ENCODE measurements at regions of chr2 and their contacts with region 1.

Region 1: GRCh38 chr2:42828487-42829425 is 36.4 kb upstream of the HAAO start:
- DNase-seq: peak; percentile 80 to 84
- H3K4me3 ChIP-seq: no peak overlapping the region
- H3K27ac ChIP-seq: peak overlapping the region; percentile 27 to 43
- H3K4me1 ChIP-seq: peaks cover 0 to 28% (median 21%) of the 10 kb centered on the region in 4 donors
- H3K27me3 ChIP-seq: no peaks in the 10 kb centered on the region
- CTCF ChIP-seq: peak; percentile 94 to 95

Region 2: GRCh38 chr2:42770288-42771131 is 58.2 kb before region 1 on chr2:
- intact Hi-C with region 1: no loop called
- DNase-seq: no peak
- H3K4me3 ChIP-seq: no peak overlapping the region
- H3K27ac ChIP-seq: no peak overlapping the region
- H3K4me1 ChIP-seq: no peaks in the 10 kb centered on the region
- H3K27me3 ChIP-seq: no peaks in the 10 kb centered on the region
- CTCF ChIP-seq: peak in 1 of 2 experiments; percentile 14

Region 3: DNA sequence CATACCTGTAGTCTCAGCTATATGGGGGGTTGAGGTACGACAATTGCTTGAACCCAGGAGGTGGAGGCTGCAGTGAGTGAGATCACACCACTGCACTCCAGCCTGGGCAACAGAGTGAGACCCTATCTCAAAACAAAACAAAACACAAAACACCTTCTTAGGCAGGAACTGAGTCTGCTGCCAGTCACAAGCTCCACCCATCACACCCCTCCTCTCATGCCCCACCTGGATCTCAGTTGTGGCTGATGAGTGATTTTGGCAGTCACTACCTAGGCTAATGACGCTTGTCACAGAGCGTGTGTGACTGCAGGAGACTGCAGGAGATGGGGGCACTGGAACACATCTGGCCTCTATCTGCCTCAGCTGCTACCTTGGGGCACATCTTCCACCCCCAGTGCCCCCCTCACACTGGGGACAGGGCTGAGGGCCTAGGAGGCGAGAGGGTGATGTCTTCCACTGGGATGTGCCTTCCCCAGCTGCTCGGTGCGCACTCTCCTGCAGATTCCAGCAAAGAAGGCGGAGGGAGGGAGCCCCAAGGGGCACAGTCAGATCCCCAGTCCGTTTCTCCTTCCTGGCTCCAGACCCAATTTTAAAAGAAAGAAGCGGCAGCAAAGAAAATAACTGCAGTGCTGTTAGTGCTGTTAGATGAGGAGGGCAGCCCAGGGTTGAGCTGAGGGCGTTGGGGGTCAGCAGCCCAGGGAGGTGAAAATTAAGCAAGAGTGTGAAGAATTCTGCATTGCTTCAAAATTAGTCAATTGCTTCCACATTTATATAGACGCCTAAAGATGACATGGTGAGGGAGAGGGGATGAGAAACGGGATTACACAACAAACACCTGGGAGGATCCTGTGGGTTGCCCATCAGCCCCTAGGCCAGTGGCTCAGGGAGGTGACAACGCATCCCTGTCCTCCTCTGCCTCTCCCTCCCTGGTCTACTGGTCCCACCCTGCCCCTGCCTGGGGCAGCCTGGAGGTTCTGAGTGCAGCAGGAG is 107.2 kb after region 1 on chr2:
- intact Hi-C with region 1: loop called (anchors 5 kb)
- DNase-seq: peak in 1 of 2 donors; percentile 38
- H3K4me3 ChIP-seq: no peak overlapping the region
- H3K27ac ChIP-seq: no peak overlapping the region
- H3K4me1 ChIP-seq: peaks cover 5 to 50% (median 39%) of the 10 kb centered on the region in 4 donors
- H3K27me3 ChIP-seq: no peaks in the 10 kb centered on the region
- CTCF ChIP-seq: no peak

Region 4: DNA sequence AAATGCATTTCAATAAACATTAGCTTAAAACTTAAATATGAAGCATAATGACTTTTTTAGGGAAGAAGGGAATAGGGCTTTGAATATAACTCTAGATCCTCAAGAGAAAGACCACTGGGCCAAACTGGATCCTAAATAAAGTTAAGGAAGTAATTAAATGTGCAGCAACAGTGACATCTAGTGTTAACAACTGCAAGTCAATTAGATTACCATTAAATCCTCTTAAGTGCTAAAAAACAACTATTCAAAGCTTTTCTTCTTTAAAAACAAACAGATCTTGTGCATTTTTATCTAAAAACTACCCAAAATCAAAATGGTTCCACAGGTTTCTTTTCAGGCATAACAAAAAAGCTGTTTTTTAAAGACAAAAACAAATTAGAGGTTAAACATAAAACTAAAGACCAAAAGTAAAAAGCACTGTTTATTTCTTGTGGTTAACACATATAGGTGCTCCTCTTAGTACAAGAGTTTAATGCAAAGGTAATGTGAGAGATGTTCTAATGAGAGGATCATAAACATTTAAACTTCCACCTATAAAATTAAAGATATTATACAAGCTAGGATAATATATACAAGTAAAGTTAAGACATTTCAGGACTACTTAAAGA is 655.7 kb after region 1 on chr2:
- intact Hi-C with region 1: loop called (anchors 5 kb)
- DNase-seq: no peak
- H3K4me3 ChIP-seq: no peak overlapping the region
- H3K27ac ChIP-seq: peak overlapping the region; percentile 65 to 80
- H3K4me1 ChIP-seq: peaks cover 0 to 70% (median 30%) of the 10 kb centered on the region in 4 donors
- H3K27me3 ChIP-seq: no peaks in the 10 kb centered on the region
- CTCF ChIP-seq: peak; percentile 68 to 84

Region 5: DNA sequence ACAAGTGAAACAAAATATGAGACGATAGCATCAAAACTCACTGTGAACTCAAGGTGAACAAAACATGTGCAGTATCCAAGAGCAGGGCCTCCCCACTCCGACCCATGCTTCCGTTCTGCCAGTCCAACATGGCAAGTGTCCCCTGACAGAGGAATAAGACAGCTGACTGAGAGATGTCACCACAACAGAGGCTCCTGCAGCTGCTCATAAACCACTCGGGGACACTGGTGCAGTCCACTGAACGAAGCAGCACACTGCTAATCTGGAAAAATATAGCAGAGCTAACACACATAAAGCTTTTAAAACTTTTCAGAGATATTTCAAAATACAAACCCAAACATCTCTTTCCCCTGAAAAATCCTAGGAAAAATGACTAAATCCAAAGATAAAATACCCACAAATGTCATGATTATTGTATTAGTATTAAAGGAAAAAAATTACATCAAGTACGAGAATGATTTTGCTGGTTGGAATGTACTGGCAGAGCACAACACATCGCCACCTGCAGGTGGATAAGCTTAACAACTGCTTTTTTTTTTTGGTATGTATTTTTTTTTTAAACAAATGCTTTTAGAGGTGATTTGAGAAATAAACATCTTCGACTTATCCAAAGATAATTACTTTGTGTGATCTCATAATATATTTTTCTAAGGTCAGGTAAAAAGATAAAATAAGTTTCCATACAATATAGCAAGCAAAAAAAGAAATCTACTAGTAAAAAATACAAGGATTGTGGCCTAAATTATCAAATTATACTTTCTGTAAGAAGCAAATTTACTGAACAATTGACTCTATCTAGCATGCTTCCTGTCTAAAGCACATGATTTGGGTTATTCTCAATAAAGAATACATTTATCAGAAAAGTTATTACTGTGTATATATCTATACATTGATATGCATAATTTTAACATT is 748.5 kb after region 1 on chr2:
- intact Hi-C with region 1: loop called (anchors 10 kb)
- DNase-seq: no peak
- H3K4me3 ChIP-seq: no peak overlapping the region
- H3K27ac ChIP-seq: peak overlapping the region; percentile 8 to 42
- H3K4me1 ChIP-seq: peaks cover 0 to 6% (median 3%) of the 10 kb centered on the region in 4 donors
- H3K27me3 ChIP-seq: no peaks in the 10 kb centered on the region
- CTCF ChIP-seq: peak; percentile 56 to 77

Measured in tibial artery (tissue), 4 donors.